GM10248 (cell line): ENCODE measurements at regions of chr4 and their contacts with region 1.

Region 1: GRCh38 chr4:114386637-114387233 is 211.9 kb upstream of the UGT8 start:
- DNase-seq: peak; percentile 20
- CTCF ChIP-seq: peak; percentile 56

Region 2: DNA sequence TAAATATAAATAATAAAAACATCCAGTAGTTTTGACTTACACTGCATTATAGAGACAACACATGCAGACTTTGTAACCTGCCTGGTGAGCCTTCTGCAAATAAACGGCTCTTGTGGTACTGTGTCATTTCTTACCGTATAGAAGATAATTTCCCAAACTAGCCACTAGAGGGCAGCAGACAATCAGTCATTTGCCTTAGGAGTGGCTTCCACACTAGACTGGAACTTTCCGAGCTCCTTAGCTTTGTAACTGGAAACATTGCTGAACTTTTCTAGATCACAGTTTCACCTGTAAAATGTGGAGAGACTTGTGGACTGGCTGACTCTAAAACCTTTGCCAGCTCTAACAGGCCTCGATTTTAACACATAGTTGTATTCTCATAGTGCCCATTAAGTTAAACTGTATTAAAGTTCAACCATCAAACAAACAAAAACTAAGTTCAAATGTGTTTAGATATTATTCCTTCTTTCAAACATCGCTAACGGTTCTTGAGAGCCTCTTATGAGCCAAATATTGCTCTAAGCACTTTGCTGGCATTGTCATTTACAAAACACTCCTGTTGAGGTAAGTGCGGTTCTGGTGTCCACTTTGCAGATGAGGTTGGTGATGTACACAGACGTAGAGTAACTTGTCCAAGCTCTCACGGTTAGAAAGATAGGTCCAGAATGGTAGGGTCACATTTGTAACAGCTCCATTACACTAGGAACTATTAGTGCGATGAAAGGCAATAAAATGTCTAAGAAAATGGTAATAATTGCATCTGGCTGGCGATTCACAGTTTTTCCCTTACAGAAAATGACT is 991.8 kb before region 1 on chr4:
- CTCF ChIA-PET with region 1: interaction called, 25 read pairs
- POLR2A ChIA-PET with region 1: no interaction called
- DNase-seq: peak; percentile 58
- CTCF ChIP-seq: peak; percentile 67

Region 3: DNA sequence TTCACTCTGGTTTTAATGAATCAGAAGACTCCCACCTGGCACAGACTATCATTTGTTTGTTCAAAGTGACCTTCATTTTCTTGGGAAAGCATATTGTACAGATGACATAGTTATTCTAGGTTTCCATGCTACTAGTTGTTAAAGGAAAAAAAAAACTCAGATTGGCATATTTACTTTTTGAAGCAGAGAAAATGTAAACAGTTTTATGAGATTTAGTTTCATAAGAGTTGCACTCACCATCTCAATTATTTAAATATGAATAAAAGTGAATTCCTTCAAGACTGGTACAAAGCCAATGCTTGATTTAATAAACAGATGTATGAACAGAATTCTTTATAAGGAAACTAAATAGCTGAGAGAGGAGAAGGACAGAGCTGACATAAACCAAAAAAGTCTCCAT is 68.4 kb before region 1 on chr4:
- CTCF ChIA-PET with region 1: no interaction called
- POLR2A ChIA-PET with region 1: no interaction called
- DNase-seq: no peak
- CTCF ChIP-seq: no peak

Region 4: DNA sequence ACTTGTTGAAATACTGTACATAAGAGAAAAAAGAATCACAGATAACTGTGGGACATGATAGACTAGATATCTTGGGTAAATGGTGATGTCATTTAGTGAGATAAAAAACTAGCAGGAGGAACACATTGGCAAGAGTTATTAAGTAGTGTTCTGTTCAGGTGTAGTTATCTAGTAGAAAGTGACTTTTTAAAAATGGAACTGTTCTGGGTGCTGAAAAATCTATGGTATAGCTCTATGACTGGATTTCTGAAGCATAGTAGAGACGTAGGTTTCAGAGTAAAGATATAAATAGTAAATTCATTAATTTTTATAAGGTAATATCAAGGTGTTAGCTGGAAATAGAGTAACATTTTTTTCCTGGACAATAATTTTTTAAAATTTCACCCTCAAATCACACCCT is 13.2 kb before region 1 on chr4:
- CTCF ChIA-PET with region 1: interaction called, 14 read pairs
- POLR2A ChIA-PET with region 1: no interaction called
- DNase-seq: no peak
- CTCF ChIP-seq: no peak

Region 5: DNA sequence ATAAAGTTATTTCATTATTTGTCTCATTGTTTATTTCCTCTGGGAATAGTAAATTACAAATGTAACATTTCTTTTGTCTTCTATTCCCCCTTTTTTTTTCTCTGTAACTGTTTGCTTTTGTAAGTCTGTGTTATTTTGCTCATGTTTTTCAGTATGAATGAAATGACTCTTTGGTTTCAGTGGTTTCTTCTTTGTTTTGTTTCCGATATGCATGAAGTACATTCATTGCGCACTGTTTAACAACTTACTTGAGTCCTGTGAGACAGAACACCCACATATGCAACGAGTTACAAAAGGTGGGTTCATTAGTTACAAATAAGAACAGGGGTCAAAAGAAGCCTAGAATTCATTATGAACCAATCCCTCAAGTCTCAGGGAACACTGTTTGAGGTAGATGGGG is 36.8 kb after region 1 on chr4:
- CTCF ChIA-PET with region 1: no interaction called
- POLR2A ChIA-PET with region 1: no interaction called
- DNase-seq: peak; percentile 14
- CTCF ChIP-seq: no peak

Region 6: GRCh38 chr4:114659386-114660008 is 272.8 kb after region 1 on chr4:
- CTCF ChIA-PET with region 1: interaction called, 24 read pairs
- POLR2A ChIA-PET with region 1: no interaction called
- DNase-seq: peak; percentile 53
- CTCF ChIP-seq: peak; percentile 91

Region 7: DNA sequence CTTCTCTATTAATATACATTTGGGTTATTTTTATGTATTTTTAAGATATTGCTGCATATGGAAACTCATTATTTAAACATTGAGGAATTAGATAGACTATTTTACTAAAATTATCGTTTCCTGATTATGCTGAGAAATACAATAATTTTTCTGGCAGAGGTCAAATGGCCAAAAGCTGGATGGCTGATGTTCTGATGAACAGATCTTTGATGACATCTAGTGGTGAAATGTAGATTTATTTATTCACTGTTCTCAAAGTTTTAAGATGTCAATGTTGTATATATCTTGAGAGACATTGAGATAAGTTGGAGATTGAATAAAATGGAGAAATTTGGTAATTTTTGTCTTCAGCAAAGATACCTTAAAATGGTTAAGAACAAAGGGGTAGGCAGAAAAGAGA is 308.0 kb after region 1 on chr4:
- CTCF ChIA-PET with region 1: interaction called, 14 read pairs
- POLR2A ChIA-PET with region 1: no interaction called
- DNase-seq: peak; percentile 11
- CTCF ChIP-seq: peak; percentile 52